ENCODE measurements at regions of chr5 and their contacts with region 1.

Region 1: DNA sequence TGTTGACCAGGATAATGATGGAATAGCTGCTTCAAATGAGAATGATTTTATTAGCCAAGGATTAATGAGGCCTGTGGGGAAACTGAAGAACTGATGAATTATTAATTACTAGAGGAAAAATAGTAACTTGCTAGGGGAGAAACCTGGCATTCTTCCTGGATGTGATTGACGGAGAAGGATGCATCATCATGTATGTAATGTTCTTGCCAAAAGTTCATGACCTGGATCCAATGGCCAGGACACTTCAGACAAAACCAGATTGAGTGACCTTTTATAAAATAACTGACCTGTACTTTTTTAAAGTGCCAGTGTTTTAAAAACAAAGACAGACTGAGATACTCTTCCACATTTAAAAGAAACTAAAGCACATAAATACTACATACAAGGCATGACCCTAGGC is 23.7 kb downstream of the KIAA1191 start:
- DNase-seq: no peak
- H3K4me3 ChIP-seq: no peak overlapping the region
- H3K27ac ChIP-seq: no peak overlapping the region
- H3K4me1 ChIP-seq: no peaks in the 10 kb centered on the region
- H3K27me3 ChIP-seq: no peaks in the 10 kb centered on the region
- CTCF ChIP-seq: no peak
- EP300 ChIP-seq: no peak
- POLR2A ChIP-seq: no peak

Region 2: DNA sequence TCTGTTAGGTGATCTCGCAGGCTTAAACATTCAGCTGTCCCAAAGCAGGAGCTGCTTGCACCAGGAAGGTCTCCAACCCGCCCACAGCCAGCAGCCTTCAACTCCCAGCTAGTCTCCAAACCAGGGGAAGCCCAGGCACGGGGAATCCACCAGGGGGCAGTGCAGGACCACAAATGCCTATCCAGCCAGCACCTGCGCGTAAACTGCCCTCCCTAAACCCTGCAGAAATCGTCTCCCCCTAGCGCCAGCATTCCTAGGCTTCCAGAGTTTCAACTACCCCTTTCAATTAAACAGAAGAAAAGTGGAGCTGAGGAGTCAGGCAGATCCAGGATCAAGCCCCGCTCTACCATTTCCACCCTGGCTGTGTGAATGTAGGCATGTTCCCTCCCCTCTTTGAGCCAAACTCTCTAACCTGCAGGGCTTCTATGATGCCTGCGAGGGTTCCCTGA is 608.1 kb before region 1 on chr5:
- in situ Hi-C with region 1: loop called in 1 of 4 experiments (anchors 25 kb)
- intact Hi-C with region 1: no loop called
- DNase-seq: peak; percentile 91
- H3K4me3 ChIP-seq: no peak overlapping the region
- H3K27ac ChIP-seq: no peak overlapping the region
- H3K4me1 ChIP-seq: no peaks in the 10 kb centered on the region
- H3K27me3 ChIP-seq: peaks cover 35% of the 10 kb centered on the region
- CTCF ChIP-seq: peak; percentile 84 to 97 (median 91)
- EP300 ChIP-seq: no peak
- POLR2A ChIP-seq: no peak

Region 3: GRCh38 chr5:176466245-176466871 is 128.4 kb after region 1 on chr5:
- in situ Hi-C with region 1: no loop called
- intact Hi-C with region 1: no loop called
- DNase-seq: no peak
- H3K4me3 ChIP-seq: no peak overlapping the region
- H3K27ac ChIP-seq: no peak overlapping the region
- H3K4me1 ChIP-seq: peaks cover 0 to 17% (median 4%) of the 10 kb centered on the region in 4 donors
- H3K27me3 ChIP-seq: no peaks in the 10 kb centered on the region
- CTCF ChIP-seq: no peak
- EP300 ChIP-seq: no peak
- POLR2A ChIP-seq: no peak

Measured in transverse colon (tissue), 4 donors.